Mammary epithelial cell (primary cell): ENCODE measurements at regions of chr10 and their contacts with region 1.

Region 1: DNA sequence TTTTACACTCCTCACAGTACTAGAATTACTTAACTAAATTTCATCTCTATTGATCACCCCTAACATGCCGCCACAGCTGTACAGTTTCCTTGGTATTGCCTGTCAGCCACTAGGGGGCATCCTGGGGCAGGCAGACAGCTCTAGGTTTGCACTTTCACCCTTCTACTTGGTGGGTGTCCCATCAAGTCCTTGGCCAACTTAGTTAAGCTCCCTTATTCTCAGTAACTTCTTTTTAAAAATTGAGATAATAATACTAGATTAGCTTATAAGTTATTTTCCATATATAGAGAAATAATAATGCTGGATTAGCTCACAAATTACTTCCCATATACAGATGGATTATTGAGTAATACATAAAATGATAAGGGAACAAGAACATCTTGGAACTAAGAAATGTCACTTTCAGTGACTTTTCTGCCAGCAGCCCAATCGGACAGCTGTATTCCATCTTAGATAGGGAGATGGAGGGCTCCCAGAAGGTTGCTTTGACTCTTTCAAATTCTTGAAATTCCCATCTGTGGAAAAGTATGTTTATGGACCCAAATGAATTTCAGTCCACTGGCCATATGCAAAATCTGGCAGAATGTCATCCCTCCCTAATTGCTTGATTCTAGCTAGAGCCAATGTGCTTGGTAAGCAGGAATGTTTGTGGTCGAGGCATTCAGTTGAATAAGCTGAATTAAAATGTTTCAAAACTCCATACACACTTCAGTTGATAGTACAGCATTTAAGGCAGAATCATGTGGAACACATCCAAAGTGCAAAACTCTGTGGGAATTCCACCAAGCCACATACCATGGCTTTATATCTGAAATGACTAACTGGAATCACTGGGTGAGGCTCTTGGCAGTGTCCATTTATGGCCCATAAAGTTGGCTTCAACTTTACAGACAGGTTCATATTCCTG is 309.7 kb downstream of the CSTF2T start:
- DNase-seq: peak; percentile 15
- H3K4me3 ChIP-seq: no peak overlapping the region
- H3K27ac ChIP-seq: no peak overlapping the region
- H3K4me1 ChIP-seq: no peaks in the 10 kb centered on the region
- H3K27me3 ChIP-seq: no peaks in the 10 kb centered on the region
- CTCF ChIP-seq: peak; percentile 88 to 91

Region 2: DNA sequence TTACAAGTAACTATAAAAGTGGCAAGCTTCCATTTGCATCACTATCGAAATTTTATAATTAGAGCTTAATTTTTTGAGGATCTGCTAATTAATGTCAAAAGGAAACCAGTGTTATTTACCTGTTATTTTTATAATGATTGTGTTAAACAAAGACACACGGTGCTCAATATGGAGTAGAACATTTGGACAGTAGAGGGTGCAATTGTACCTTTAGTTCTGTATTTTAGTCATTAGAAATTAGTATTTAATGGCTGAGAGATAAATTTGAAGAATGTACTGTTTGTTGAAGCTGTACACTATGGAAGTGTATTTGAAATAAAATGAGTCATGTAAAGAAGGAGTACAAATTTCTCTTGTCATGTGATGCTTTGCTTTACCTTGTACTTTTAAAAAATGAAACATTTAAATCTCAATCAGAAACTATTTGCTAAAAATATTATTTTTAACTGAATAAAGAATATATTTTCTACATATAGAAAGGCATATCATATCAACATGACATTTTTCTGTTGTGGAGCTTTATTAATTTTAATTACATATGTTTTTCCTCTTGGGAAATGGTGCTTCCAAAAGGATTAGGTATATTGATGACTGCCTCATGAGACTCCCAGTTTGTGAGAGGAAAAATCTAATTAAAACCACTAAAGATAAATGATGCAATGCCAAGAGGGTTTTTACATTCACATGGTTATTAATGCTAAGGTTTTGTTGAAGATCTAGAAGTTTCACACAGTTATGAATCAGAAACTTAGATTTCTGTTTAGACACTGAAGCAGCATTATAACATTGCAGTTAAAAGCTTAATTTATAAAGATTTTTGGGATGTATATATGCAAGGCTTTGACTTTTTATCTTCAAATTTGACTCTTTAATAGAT is 325.8 kb before region 1 on chr10:
- CTCF ChIA-PET with region 1: interaction called, 6 read pairs
- dilution Hi-C with region 1: no loop called
- in situ Hi-C with region 1: no loop called
- intact Hi-C with region 1: loop called (anchors 10 kb)
- DNase-seq: peak; percentile 15
- H3K4me3 ChIP-seq: no peak overlapping the region
- H3K27ac ChIP-seq: no peak overlapping the region
- H3K4me1 ChIP-seq: no peaks in the 10 kb centered on the region
- H3K27me3 ChIP-seq: no peaks in the 10 kb centered on the region
- CTCF ChIP-seq: peak; percentile 56 to 61

Region 3: GRCh38 chr10:51422311-51423120 is 32.8 kb after region 1 on chr10:
- CTCF ChIA-PET with region 1: interaction called, 4 read pairs
- dilution Hi-C with region 1: no loop called
- in situ Hi-C with region 1: no loop called
- intact Hi-C with region 1: loop called (anchors 2 kb)
- DNase-seq: peak; percentile 14
- H3K4me3 ChIP-seq: no peak overlapping the region
- H3K27ac ChIP-seq: no peak overlapping the region
- H3K4me1 ChIP-seq: no peaks in the 10 kb centered on the region
- H3K27me3 ChIP-seq: no peaks in the 10 kb centered on the region
- CTCF ChIP-seq: peak; percentile 80 to 81

Region 4: DNA sequence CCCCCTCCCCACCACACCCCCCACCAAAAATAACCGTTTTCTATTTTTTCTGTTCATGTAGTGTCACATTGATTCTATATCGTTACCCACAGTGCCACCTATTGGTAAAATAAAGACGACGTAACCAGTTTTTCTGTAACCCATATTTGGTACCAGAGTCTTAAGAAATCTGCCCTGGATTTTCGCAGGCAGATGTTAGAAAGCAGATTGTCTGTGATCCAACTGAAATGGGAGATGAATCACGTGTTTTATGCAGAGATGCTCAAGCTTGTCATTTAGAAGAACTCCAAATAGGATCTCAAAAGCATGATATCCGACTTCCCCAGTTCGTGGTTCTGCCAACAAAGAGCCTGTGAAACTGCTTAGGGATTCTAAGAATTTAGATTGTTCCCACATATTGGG is 570.8 kb after region 1 on chr10:
- CTCF ChIA-PET with region 1: no interaction called
- dilution Hi-C with region 1: no loop called
- in situ Hi-C with region 1: loop called in 1 of 2 experiments (anchors 25 kb)
- intact Hi-C with region 1: loop called (anchors 1 kb)
- DNase-seq: peak; percentile 18
- H3K4me3 ChIP-seq: no peak overlapping the region
- H3K27ac ChIP-seq: no peak overlapping the region
- H3K4me1 ChIP-seq: no peaks in the 10 kb centered on the region
- H3K27me3 ChIP-seq: no peaks in the 10 kb centered on the region
- CTCF ChIP-seq: peak; percentile 45 to 56

Region 5: GRCh38 chr10:52004342-52004949 is 614.8 kb after region 1 on chr10:
- CTCF ChIA-PET with region 1: no interaction called
- dilution Hi-C with region 1: no loop called
- in situ Hi-C with region 1: no loop called
- intact Hi-C with region 1: loop called (anchors 1 kb)
- DNase-seq: peak; percentile 16
- H3K4me3 ChIP-seq: no peak overlapping the region
- H3K27ac ChIP-seq: no peak overlapping the region
- H3K4me1 ChIP-seq: no peaks in the 10 kb centered on the region
- H3K27me3 ChIP-seq: no peaks in the 10 kb centered on the region
- CTCF ChIP-seq: peak; percentile 61 to 70

Region 6: GRCh38 chr10:52215745-52216361 is 826.2 kb after region 1 on chr10:
- CTCF ChIA-PET with region 1: no interaction called
- dilution Hi-C with region 1: no loop called
- in situ Hi-C with region 1: no loop called
- intact Hi-C with region 1: loop called (anchors 2 kb)
- DNase-seq: peak; percentile 57
- H3K4me3 ChIP-seq: no peak overlapping the region
- H3K27ac ChIP-seq: no peak overlapping the region
- H3K4me1 ChIP-seq: no peaks in the 10 kb centered on the region
- H3K27me3 ChIP-seq: no peaks in the 10 kb centered on the region
- CTCF ChIP-seq: peak; percentile 66 to 68